ENCODE measurements at regions of chr9 and their contacts with region 1.

Region 1: GRCh38 chr9:129737479-129738274 is 15.2 kb downstream of the PTGES start:
- DNase-seq: peak; percentile 80 to 90
- H3K4me3 ChIP-seq: peak overlapping the region; percentile 56
- H3K4me3 Mint-ChIP-seq: peak overlapping the region; percentile 67
- H3K27ac Mint-ChIP-seq: no peak overlapping the region
- H3K4me1 ChIP-seq: no peaks in the 10 kb centered on the region
- H3K4me1 Mint-ChIP-seq: no peaks in the 10 kb centered on the region
- H3K27me3 ChIP-seq: no peaks in the 10 kb centered on the region
- H3K27me3 Mint-ChIP-seq: peaks cover under 1% of the 10 kb centered on the region
- CTCF ChIP-seq: peak; percentile 89 to 96

Region 2: GRCh38 chr9:129641746-129642513 is 95.7 kb before region 1 on chr9 and contains the start of gene ASB6:
- CTCF ChIA-PET with region 1: interaction called, 6 read pairs
- POLR2A ChIA-PET with region 1: no interaction called
- intact Hi-C with region 1: loop called (anchors 1 kb)
- DNase-seq: peak; percentile 97 to 100
- H3K4me3 ChIP-seq: peak within 1 kb of the TSS; percentile 99
- H3K4me3 Mint-ChIP-seq: peak within 1 kb of the TSS; percentile 89
- H3K27ac Mint-ChIP-seq: peak within 1 kb of the TSS; percentile 85
- H3K4me1 ChIP-seq: peaks cover 3% of the 10 kb centered on the region; the same call in 1 of the 2 replicates
- H3K4me1 Mint-ChIP-seq: peaks cover 6% of the 10 kb centered on the region
- H3K27me3 ChIP-seq: no peaks in the 10 kb centered on the region
- H3K27me3 Mint-ChIP-seq: no peaks in the 10 kb centered on the region
- CTCF ChIP-seq: peak; percentile 82 to 94
- total RNA-seq, gene ASB6: 17.4 and 18.1 TPM in 2 replicates

Region 3: DNA sequence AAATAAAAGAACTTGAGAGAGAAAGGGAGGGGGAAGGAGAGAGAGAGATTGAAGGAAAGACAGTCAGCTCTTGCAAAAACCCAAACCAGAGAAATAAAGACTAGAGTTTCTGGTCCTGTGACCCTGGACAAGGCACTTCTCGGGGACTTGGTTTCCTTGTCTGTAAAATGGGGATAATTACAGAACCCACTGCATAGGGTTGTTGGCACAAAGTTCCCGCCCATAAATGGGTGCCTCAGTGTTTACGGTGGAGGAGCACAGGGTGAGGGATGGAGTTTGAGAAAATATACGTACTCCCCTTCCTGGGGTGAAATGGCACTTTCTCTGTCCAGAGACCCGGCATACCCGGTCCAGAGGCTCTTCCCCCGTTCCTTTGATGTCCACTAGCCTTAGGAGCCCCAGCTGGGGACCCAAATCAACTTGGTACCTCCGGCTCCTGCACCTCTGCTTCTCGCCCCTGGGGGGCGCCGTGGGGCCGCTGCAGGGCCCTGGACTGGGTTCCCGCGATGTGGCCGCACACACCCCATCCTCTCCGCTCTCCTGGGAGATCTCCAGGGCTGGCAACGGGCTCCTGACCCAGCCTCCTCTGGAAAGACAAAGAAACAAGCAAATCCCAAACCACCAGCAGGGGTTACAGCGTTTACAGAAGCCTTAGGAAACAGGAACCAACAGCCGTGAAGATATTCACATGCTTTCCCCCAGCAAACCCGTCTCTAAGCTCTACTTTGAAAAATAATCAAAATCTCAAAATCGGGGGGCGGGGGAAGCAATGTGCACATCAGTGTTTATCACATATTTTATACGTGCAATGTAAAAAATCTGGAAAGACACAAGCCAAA is 11.1 kb before region 1 on chr9:
- CTCF ChIA-PET with region 1: interaction called, 14 read pairs
- POLR2A ChIA-PET with region 1: interaction called, 5 read pairs
- intact Hi-C with region 1: no loop called
- DNase-seq: peak; percentile 65 to 78
- H3K4me3 ChIP-seq: no peak overlapping the region
- H3K4me3 Mint-ChIP-seq: no peak overlapping the region
- H3K27ac Mint-ChIP-seq: no peak overlapping the region
- H3K4me1 ChIP-seq: no peaks in the 10 kb centered on the region
- H3K4me1 Mint-ChIP-seq: no peaks in the 10 kb centered on the region
- H3K27me3 ChIP-seq: no peaks in the 10 kb centered on the region
- H3K27me3 Mint-ChIP-seq: no peaks in the 10 kb centered on the region
- CTCF ChIP-seq: peak; percentile 85 to 89

Region 4: GRCh38 chr9:129776938-129777768 is 39.5 kb after region 1 on chr9:
- CTCF ChIA-PET with region 1: interaction called, 15 read pairs
- POLR2A ChIA-PET with region 1: no interaction called
- intact Hi-C with region 1: no loop called
- DNase-seq: peak in 1 of 2 experiments; percentile 60
- H3K4me3 ChIP-seq: no peak overlapping the region
- H3K4me3 Mint-ChIP-seq: no peak overlapping the region
- H3K27ac Mint-ChIP-seq: no peak overlapping the region
- H3K4me1 ChIP-seq: peaks cover 11% of the 10 kb centered on the region
- H3K4me1 Mint-ChIP-seq: peaks cover 6% of the 10 kb centered on the region
- H3K27me3 ChIP-seq: no peaks in the 10 kb centered on the region
- H3K27me3 Mint-ChIP-seq: peaks cover 6% of the 10 kb centered on the region
- CTCF ChIP-seq: no peak

Region 5: DNA sequence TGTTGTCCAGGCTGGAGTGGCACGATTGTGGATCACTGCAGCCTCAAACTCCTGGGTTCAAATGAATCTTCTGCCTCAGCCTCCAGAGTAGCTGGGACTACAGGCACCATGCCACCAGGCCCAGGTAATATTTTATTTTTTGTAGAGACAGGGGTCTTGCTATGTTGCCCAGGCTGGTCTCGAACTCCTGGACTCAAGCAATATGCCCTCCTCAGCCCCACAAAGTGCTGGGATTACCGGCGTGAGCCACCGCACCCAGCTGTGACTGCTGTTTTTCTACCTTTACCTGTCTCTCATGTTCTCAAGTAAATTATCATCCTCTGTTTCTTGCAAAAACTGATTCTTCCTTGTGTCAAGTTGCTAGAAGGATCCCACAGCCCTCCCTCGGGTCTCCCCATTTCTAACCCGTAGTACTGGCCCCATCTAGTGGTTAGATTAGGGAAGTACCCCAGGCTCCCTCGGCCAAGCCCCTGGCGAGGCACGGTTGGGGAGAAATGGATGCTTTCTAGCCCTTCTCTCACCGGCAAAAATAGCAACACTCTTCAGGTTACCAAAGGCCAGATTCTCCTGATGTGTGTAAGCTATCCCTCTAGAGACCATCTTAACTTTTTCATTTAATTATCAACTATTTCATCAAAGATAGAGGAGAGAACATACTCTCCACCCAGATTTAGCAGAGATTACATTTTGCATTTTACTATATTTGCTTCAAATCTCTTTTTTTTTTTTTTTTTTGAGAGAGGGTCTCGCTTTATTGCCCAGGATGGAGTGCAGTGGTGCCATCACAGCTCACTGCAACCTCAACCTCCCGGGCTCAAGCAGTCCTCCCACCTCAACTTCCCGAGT is 46.1 kb after region 1 on chr9:
- CTCF ChIA-PET with region 1: interaction called, 15 read pairs
- POLR2A ChIA-PET with region 1: no interaction called
- intact Hi-C with region 1: loop called (anchors 1 kb)
- DNase-seq: peak; percentile 70 to 82
- H3K4me3 ChIP-seq: no peak overlapping the region
- H3K4me3 Mint-ChIP-seq: no peak overlapping the region
- H3K27ac Mint-ChIP-seq: no peak overlapping the region
- H3K4me1 ChIP-seq: peaks cover 7% of the 10 kb centered on the region
- H3K4me1 Mint-ChIP-seq: no peaks in the 10 kb centered on the region
- H3K27me3 ChIP-seq: no peaks in the 10 kb centered on the region
- H3K27me3 Mint-ChIP-seq: peaks cover 13% of the 10 kb centered on the region
- CTCF ChIP-seq: peak; percentile 89 to 91

Region 6: DNA sequence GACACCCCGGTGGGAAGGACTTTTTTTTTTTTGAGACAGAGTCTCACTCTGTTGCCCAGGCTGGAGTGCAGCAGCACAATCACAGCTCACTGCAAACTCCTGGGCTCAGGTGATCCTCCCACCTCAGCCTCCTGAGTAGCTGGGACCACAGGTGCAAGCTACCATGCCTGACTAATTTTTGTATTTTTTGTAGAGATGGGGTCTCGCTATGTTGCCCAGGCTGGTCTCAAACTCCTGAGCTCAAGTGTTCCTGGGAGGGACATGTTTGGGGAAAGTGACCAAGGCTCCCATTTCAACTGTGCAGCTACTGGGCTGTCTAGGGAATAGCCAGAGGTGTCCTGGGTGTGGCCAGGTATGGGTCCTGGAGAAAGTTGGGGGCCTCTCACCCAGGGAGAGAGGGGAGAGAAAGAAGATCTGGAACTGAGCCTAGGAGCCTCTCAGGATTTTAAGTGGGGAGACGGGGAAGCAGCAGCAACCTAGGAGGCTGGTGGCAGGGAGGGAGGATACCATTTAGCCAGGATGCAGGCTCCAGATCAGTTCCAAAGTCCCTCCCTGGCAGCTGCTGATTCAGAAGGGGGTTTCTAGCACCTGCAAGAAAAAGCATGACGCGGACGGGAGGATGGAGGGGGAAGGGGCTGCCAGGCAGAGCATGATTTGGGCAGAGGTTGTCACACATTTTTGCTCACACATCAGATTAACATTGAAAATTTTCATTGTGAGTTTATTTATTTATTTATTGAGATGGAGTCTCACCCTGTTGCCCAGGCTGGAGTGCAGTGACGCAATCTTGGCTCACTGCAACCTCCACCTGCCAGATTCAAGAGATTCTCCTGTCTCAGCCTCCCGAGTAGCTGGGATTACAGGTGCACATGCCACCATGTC is 58.6 kb after region 1 on chr9:
- CTCF ChIA-PET with region 1: no interaction called
- POLR2A ChIA-PET with region 1: no interaction called
- intact Hi-C with region 1: loop called (anchors 2 kb)
- DNase-seq: no peak
- H3K4me3 ChIP-seq: no peak overlapping the region
- H3K4me3 Mint-ChIP-seq: no peak overlapping the region
- H3K27ac Mint-ChIP-seq: no peak overlapping the region
- H3K4me1 ChIP-seq: no peaks in the 10 kb centered on the region
- H3K4me1 Mint-ChIP-seq: peaks cover 5% of the 10 kb centered on the region
- H3K27me3 ChIP-seq: no peaks in the 10 kb centered on the region
- H3K27me3 Mint-ChIP-seq: peaks cover 2% of the 10 kb centered on the region
- CTCF ChIP-seq: no peak

Measured in Caco-2 (cell line).